ENCODE measurements at regions of chr4 and their contacts with region 1.

Region 1: DNA sequence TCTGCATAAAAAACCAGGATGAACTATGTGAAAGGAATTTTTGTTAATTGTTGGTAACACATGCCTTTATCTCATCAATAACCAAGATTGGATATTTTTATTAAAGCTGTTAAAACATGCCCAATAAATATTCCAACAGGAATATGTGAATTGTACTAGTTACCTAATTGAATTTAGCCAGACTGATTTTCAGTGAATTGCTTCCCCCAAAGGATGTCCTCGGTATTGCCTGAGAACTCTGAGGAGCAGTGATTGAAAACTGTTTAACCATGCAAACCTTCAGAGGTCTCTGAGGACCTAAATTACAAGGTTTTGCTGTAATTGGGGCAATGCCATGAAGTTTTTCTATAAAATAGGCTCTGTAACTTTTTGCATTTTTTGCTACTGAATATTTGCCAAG is 66.6 kb downstream of the BLTP1 start:
- DNase-seq: no peak
- H3K4me3 ChIP-seq: no peak overlapping the region
- H3K27ac ChIP-seq: no peak overlapping the region
- H3K4me1 ChIP-seq: no peaks in the 10 kb centered on the region
- H3K27me3 ChIP-seq: no peaks in the 10 kb centered on the region
- CTCF ChIP-seq: peak in 2 of 3 experiments; percentile 21 to 56; a peak in 2 of 4 replicates
- EP300 ChIP-seq: no peak
- POLR2A ChIP-seq: no peak
- RAD21 ChIP-seq: peak; percentile 56 to 57

Region 2: GRCh38 chr4:122232633-122233032 is 13.9 kb after region 1 on chr4:
- CTCF ChIA-PET with region 1: interaction called, 11 read pairs
- POLR2A ChIA-PET with region 1: no interaction called
- DNase-seq: no peak
- H3K4me3 ChIP-seq: no peak overlapping the region
- H3K27ac ChIP-seq: no peak overlapping the region
- H3K4me1 ChIP-seq: no peaks in the 10 kb centered on the region
- H3K27me3 ChIP-seq: no peaks in the 10 kb centered on the region
- CTCF ChIP-seq: no peak
- EP300 ChIP-seq: no peak
- POLR2A ChIP-seq: no peak
- RAD21 ChIP-seq: no peak

Region 3: GRCh38 chr4:122276359-122276758 is 57.6 kb after region 1 on chr4:
- CTCF ChIA-PET with region 1: no interaction called
- POLR2A ChIA-PET with region 1: no interaction called
- DNase-seq: no peak
- H3K4me3 ChIP-seq: no peak overlapping the region
- H3K27ac ChIP-seq: no peak overlapping the region
- H3K4me1 ChIP-seq: no peaks in the 10 kb centered on the region
- H3K27me3 ChIP-seq: peaks cover 0 to 1% (median 0%) of the 10 kb centered on the region in 4 experiments; a peak in 1 of 7 replicates
- CTCF ChIP-seq: no peak
- EP300 ChIP-seq: no peak
- POLR2A ChIP-seq: no peak
- RAD21 ChIP-seq: no peak

Measured in H1 (cell line).